IMR-90 (cell line): ENCODE measurements at regions of chr14 and their contacts with region 1.

Region 1: DNA sequence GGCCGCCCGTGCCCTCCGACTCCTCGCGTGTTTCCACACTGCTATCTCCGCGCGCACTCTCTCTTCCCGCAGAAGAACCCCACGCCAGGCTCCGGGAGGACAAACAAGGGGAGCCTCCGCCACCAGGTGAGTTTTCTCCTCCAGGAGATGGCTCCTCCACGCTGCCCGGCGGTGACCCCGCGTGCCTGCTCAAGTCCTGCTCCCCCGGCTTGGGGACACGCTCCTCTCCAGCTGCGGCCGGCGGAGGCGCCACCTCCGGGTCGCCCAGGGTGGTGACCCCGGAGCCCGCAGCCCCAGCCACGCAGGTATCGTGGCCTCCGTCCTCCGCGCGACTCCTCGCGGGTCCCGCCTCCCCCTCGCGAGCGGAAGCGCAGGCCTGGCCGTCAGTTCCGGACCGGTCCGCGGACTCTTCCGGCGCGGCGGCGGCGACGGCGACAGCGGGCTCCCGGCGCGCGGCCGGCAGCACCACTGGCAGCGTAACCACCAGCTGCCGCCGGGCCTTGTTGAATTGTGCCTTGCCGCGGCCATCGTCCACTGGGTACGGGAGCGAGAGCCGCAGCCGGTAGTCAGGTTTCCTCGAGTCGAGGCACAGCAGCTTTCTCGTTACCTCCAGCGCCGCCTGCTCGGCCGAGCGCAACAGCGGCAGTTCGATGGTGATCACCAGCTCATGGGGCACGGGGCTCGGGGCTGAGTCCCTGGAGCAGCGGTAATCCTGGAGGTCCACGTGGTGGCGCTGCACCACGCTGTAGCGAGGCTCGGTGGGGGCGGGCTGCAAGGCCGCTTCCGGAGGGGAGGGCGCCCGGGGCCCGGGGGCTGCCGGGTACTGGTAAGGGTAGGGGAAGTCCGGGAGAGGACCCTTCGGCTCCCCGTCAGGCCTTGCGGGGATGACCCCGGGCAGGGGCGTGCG is 1.2 kb downstream of the DNAAF2 start:
- DNase-seq: peak; percentile 95
- ATAC-seq: peak; percentile 91
- H3K4me3 ChIP-seq: peak overlapping the region; percentile 82
- H3K27ac ChIP-seq: peak overlapping the region; percentile 92
- H3K4me1 ChIP-seq: no peaks in the 10 kb centered on the region
- H3K27me3 ChIP-seq: no peaks in the 10 kb centered on the region
- CTCF ChIP-seq: peak; percentile 91
- POLR2A ChIP-seq: peak; percentile 69; the same call in 1 of the 2 replicates
- RAD21 ChIP-seq: peak; percentile 84

Region 2: GRCh38 chr14:49692811-49693734 is 59.2 kb after region 1 on chr14 and contains the start of gene KLHDC1:
- CTCF ChIA-PET with region 1: no interaction called
- POLR2A ChIA-PET with region 1: no interaction called
- dilution Hi-C with region 1: no loop called
- in situ Hi-C with region 1: no loop called
- intact Hi-C with region 1: loop called (anchors 5 kb)
- DNase-seq: peak; percentile 63
- ATAC-seq: peak; percentile 82
- H3K4me3 ChIP-seq: peak within 1 kb of the TSS; percentile 68
- H3K27ac ChIP-seq: peak within 1 kb of the TSS; percentile 79
- H3K4me1 ChIP-seq: peaks cover 3% of the 10 kb centered on the region
- H3K27me3 ChIP-seq: no peaks in the 10 kb centered on the region
- CTCF ChIP-seq: no peak
- POLR2A ChIP-seq: peak; percentile 80
- RAD21 ChIP-seq: no peak
- total RNA-seq, gene KLHDC1: 0.90 and 1.9 TPM in 2 replicates

Region 3: GRCh38 chr14:49767562-49768300 is 133.8 kb after region 1 on chr14 and contains the start of gene KLHDC2:
- CTCF ChIA-PET with region 1: interaction called, 3 read pairs
- POLR2A ChIA-PET with region 1: interaction called, 9 read pairs
- dilution Hi-C with region 1: no loop called
- in situ Hi-C with region 1: loop called (anchors 5 kb)
- intact Hi-C with region 1: loop called (anchors 1 kb)
- DNase-seq: peak; percentile 88
- ATAC-seq: peak; percentile 90
- H3K4me3 ChIP-seq: peak within 1 kb of the TSS; percentile 96
- H3K27ac ChIP-seq: peak within 1 kb of the TSS; percentile 91
- H3K4me1 ChIP-seq: peaks cover 9% of the 10 kb centered on the region
- H3K27me3 ChIP-seq: no peaks in the 10 kb centered on the region
- CTCF ChIP-seq: peak; percentile 53
- POLR2A ChIP-seq: peak; percentile 91
- RAD21 ChIP-seq: no peak
- total RNA-seq, gene KLHDC2: 41.8 and 51.1 TPM in 2 replicates

Region 4: GRCh38 chr14:49774106-49774505 is 140.2 kb after region 1 on chr14:
- CTCF ChIA-PET with region 1: interaction called, 3 read pairs
- POLR2A ChIA-PET with region 1: interaction called, 9 read pairs
- dilution Hi-C with region 1: no loop called
- in situ Hi-C with region 1: loop called (anchors 5 kb)
- intact Hi-C with region 1: loop called (anchors 1 kb)
- DNase-seq: peak; percentile 40
- ATAC-seq: peak; percentile 65
- H3K4me3 ChIP-seq: no peak overlapping the region
- H3K27ac ChIP-seq: no peak overlapping the region
- H3K4me1 ChIP-seq: peaks cover 7% of the 10 kb centered on the region
- H3K27me3 ChIP-seq: no peaks in the 10 kb centered on the region
- CTCF ChIP-seq: no peak
- POLR2A ChIP-seq: no peak
- RAD21 ChIP-seq: no peak

Region 5: DNA sequence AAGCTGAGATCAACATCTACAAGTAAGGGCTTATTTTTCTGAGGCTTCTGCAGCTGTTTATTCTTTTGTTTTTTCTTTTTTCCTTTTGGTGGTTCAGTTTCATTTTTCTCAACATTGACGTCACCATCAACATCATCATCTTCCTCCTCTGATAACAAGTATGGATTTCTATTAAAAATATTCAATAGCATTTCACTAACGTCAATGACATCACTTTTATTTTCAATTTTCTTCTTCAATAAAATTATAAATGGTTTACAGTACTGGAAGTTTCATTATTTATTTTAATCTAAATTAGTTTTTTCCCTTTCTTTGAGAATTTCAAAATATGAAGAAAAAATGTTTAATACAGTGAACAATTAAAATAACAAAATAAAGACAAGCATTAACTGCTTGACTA is 194.7 kb after region 1 on chr14:
- CTCF ChIA-PET with region 1: no interaction called
- POLR2A ChIA-PET with region 1: no interaction called
- dilution Hi-C with region 1: no loop called
- in situ Hi-C with region 1: no loop called
- intact Hi-C with region 1: loop called (anchors 2 kb)
- DNase-seq: no peak
- ATAC-seq: no peak
- H3K4me3 ChIP-seq: no peak overlapping the region
- H3K27ac ChIP-seq: no peak overlapping the region
- H3K4me1 ChIP-seq: no peaks in the 10 kb centered on the region
- H3K27me3 ChIP-seq: no peaks in the 10 kb centered on the region
- CTCF ChIP-seq: no peak
- POLR2A ChIP-seq: no peak
- RAD21 ChIP-seq: no peak

Region 6: GRCh38 chr14:49852301-49853157 is 218.6 kb after region 1 on chr14 and contains the start of gene NEMF:
- CTCF ChIA-PET with region 1: interaction called, 4 read pairs
- POLR2A ChIA-PET with region 1: no interaction called
- dilution Hi-C with region 1: no loop called
- in situ Hi-C with region 1: no loop called
- intact Hi-C with region 1: loop called (anchors 5 kb)
- DNase-seq: peak; percentile 83
- ATAC-seq: peak; percentile 86
- H3K4me3 ChIP-seq: peak within 1 kb of the TSS; percentile 89
- H3K27ac ChIP-seq: peak within 1 kb of the TSS; percentile 97
- H3K4me1 ChIP-seq: no peaks in the 10 kb centered on the region
- H3K27me3 ChIP-seq: no peaks in the 10 kb centered on the region
- CTCF ChIP-seq: peak; percentile 75
- POLR2A ChIP-seq: peak; percentile 69; the same call in 1 of the 2 replicates
- RAD21 ChIP-seq: peak; percentile 32
- total RNA-seq, gene NEMF: 30.5 and 76.1 TPM in 2 replicates